GM12878 (cell line): ENCODE measurements at regions of chr20 and their contacts with region 1.

Region 1: GRCh38 chr20:1108437-1108920 is 9.9 kb upstream of the PSMF1 start:
- DNase-seq: no peak
- ATAC-seq: peak; percentile 92
- H3K4me3 ChIP-seq: no peak overlapping the region
- H3K27ac ChIP-seq: no peak overlapping the region
- H3K4me1 ChIP-seq: no peaks in the 10 kb centered on the region
- H3K27me3 ChIP-seq: no peaks in the 10 kb centered on the region; a peak in 2 of 4 replicates
- CTCF ChIP-seq: peak; percentile 76 to 89 (median 77)
- EP300 ChIP-seq: no peak
- POLR2A ChIP-seq: no peak
- RAD21 ChIP-seq: peak; percentile 64

Region 2: DNA sequence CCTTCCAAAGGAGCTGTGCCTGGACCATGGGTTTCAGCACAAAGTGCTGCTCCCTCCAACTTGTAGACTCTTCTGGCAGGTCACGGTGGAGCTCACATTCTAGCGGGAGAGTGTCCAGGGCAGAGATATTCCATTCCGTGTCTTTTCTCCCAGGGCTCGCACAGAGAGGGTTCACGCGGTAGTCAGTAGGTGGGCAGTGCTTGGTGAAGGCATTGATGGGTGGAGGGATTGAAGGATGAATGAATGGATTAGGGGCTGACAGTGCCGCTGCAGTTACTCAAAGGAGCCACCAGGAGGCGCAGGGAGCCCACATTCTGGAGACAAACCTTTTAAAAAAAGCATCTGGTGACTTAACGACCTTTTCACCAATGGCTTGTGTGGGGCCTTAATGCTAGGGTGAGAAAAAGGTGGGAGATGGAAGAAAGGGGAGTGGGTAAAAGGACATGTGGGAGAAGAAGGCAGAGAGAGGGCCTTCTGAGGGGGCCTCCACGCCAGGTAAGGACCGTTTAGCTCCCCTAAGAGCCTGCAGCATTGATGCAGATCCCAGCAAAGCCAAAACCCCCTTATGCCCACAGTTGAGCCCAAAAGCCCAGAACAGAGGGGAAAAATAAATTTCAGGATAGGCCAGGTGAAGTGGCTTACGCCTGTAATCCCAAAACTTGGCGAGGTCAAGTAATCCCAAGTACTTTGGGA is 292.4 kb before region 1 on chr20:
- CTCF ChIA-PET with region 1: interaction called, 13 read pairs
- POLR2A ChIA-PET with region 1: no interaction called
- RAD21 ChIA-PET with region 1: interaction called, 9 read pairs
- SMC1A ChIA-PET with region 1: interaction called, 3 read pairs
- in situ Hi-C with region 1: no loop called
- intact Hi-C with region 1: loop called (anchors 5 kb)
- DNase-seq: no peak
- ATAC-seq: peak; percentile 75
- H3K4me3 ChIP-seq: no peak overlapping the region
- H3K27ac ChIP-seq: no peak overlapping the region
- H3K4me1 ChIP-seq: no peaks in the 10 kb centered on the region
- H3K27me3 ChIP-seq: no peaks in the 10 kb centered on the region
- CTCF ChIP-seq: peak; percentile 98
- EP300 ChIP-seq: no peak
- POLR2A ChIP-seq: no peak
- RAD21 ChIP-seq: peak; percentile 95

Region 3: GRCh38 chr20:956330-956951 is 152.0 kb before region 1 on chr20:
- CTCF ChIA-PET with region 1: interaction called, 33 read pairs
- POLR2A ChIA-PET with region 1: no interaction called
- RAD21 ChIA-PET with region 1: interaction called, 10 read pairs
- SMC1A ChIA-PET with region 1: interaction called, 7 read pairs
- in situ Hi-C with region 1: no loop called
- intact Hi-C with region 1: loop called (anchors 1 kb)
- DNase-seq: peak; percentile 12
- ATAC-seq: peak; percentile 96
- H3K4me3 ChIP-seq: no peak overlapping the region
- H3K27ac ChIP-seq: no peak overlapping the region
- H3K4me1 ChIP-seq: no peaks in the 10 kb centered on the region
- H3K27me3 ChIP-seq: no peaks in the 10 kb centered on the region; a peak in 1 of 4 replicates
- CTCF ChIP-seq: peak; percentile 97 to 99 (median 98)
- EP300 ChIP-seq: no peak
- POLR2A ChIP-seq: no peak
- RAD21 ChIP-seq: peak; percentile 100

Region 4: GRCh38 chr20:1086277-1087213 is 21.9 kb before region 1 on chr20:
- CTCF ChIA-PET with region 1: interaction called, 22 read pairs
- POLR2A ChIA-PET with region 1: no interaction called
- RAD21 ChIA-PET with region 1: interaction called, 6 read pairs
- SMC1A ChIA-PET with region 1: interaction called, 5 read pairs
- in situ Hi-C with region 1: no loop called
- intact Hi-C with region 1: no loop called
- DNase-seq: no peak
- ATAC-seq: peak; percentile 86
- H3K4me3 ChIP-seq: no peak overlapping the region
- H3K27ac ChIP-seq: no peak overlapping the region
- H3K4me1 ChIP-seq: no peaks in the 10 kb centered on the region; the same call in 1 of the 2 replicates
- H3K27me3 ChIP-seq: no peaks in the 10 kb centered on the region
- CTCF ChIP-seq: no peak
- EP300 ChIP-seq: no peak
- POLR2A ChIP-seq: no peak
- RAD21 ChIP-seq: no peak

Region 5: GRCh38 chr20:1094751-1095150 is 13.7 kb before region 1 on chr20:
- CTCF ChIA-PET with region 1: interaction called, 12 read pairs
- POLR2A ChIA-PET with region 1: no interaction called
- RAD21 ChIA-PET with region 1: no interaction called
- SMC1A ChIA-PET with region 1: interaction called, 4 read pairs
- in situ Hi-C with region 1: no loop called
- intact Hi-C with region 1: no loop called
- DNase-seq: no peak
- ATAC-seq: no peak
- H3K4me3 ChIP-seq: no peak overlapping the region
- H3K27ac ChIP-seq: no peak overlapping the region
- H3K4me1 ChIP-seq: no peaks in the 10 kb centered on the region
- H3K27me3 ChIP-seq: no peaks in the 10 kb centered on the region
- CTCF ChIP-seq: no peak
- EP300 ChIP-seq: no peak
- POLR2A ChIP-seq: no peak
- RAD21 ChIP-seq: no peak

Region 6: DNA sequence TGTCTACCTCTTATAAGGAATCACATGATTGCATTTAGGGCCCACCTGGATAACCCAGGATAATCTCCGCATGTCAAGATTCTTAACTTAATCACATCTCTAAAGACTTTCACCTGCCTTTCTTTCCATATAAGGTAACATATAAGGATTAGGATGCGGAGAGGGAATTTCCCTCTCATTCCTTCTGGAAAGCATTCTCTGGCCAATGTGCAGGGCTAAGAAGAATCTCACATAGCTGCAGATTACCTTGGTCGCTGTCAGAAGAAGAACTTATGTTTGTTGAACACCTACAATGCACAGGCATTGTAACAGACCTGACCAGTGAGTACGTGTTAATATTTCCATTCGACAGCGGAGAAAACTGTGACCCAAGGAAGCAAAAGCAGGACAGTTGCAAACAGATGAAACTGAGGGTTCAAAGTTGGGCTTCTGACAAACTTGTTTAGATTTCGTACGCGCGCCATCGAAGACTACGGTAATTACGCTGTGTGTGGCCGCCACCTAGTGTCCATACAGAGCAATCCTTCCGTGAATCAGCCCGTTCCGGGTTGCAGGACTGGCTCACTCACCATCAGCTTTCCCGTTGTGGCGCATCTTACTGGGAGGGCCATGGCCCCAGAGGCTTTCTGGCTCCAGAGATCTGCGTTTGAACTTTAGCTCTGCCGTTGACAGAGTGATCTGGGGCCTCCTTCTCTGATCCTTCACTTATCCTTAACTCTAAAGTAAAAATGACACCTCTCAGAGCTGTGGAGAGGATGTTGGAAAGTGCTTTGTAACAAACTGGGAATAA is 104.3 kb after region 1 on chr20:
- CTCF ChIA-PET with region 1: interaction called, 8 read pairs
- POLR2A ChIA-PET with region 1: no interaction called
- RAD21 ChIA-PET with region 1: interaction called, 3 read pairs
- SMC1A ChIA-PET with region 1: no interaction called
- in situ Hi-C with region 1: no loop called
- intact Hi-C with region 1: loop called (anchors 2 kb)
- DNase-seq: no peak
- ATAC-seq: peak; percentile 97
- H3K4me3 ChIP-seq: no peak overlapping the region
- H3K27ac ChIP-seq: no peak overlapping the region
- H3K4me1 ChIP-seq: peaks cover 2% of the 10 kb centered on the region; the same call in 1 of the 2 replicates
- H3K27me3 ChIP-seq: peaks cover 0 to 4% of the 10 kb centered on the region in 2 experiments; a peak in 1 of 4 replicates
- CTCF ChIP-seq: peak; percentile 76 to 89 (median 87)
- EP300 ChIP-seq: no peak
- POLR2A ChIP-seq: no peak
- RAD21 ChIP-seq: peak; percentile 71